PC-9 (cell line): ENCODE measurements at regions of chr12 and their contacts with region 1.

Region 1: DNA sequence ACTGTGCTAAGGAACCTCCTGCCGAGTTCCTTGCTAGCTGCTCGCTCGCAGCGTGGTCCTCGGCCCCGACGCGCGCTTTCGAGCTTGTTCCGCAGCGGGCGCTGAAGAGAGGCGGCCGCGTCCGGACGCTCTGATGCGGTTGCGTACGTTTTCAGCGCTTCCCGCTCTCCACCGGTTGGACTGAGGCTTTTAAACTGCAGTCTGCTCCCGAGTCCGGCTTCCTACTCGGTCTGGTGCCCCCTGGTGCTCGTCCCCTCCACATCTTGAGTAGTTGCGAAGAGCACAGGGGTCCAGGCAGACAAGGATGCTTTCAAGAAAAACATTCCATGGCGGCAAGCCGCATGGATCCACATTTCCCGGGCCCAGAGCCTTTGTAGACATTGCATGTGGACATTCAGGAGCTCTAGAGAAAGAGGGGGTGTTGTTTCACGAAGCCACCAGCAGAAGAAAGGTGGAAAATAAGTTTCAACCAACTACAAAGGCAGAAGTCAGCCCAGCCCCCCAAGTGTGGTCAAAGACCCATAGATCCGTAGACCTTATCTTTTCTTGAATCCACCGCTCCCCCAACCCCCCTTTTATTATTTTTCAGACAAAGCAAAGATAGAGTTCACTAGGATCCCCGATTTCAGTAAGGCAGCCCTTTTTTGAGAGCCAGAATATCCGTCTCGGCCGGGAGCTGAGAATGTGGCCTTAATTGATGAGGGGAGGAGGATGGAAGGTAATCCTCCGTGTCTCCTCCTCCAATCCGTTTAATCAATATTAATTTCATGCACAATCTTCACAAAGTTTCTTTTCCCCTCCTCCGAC is 984 bp upstream of the WNK1 start:
- DNase-seq: peak; percentile 90 to 92
- H3K4me3 ChIP-seq: peak overlapping the region; percentile 81
- H3K27ac ChIP-seq: peak overlapping the region; percentile 38
- H3K4me1 ChIP-seq: peaks cover 32% of the 10 kb centered on the region
- H3K27me3 ChIP-seq: no peaks in the 10 kb centered on the region
- CTCF ChIP-seq: peak; percentile 84

Region 2: GRCh38 chr12:356276-356988 is 395.0 kb before region 1 on chr12:
- CTCF ChIA-PET with region 1: interaction called, 11 read pairs
- POLR2A ChIA-PET with region 1: no interaction called
- intact Hi-C with region 1: no loop called
- DNase-seq: no peak
- H3K4me3 ChIP-seq: no peak overlapping the region
- H3K27ac ChIP-seq: no peak overlapping the region
- H3K4me1 ChIP-seq: peaks cover 5% of the 10 kb centered on the region; the same call in 1 of the 2 replicates
- H3K27me3 ChIP-seq: no peaks in the 10 kb centered on the region
- CTCF ChIP-seq: no peak

Region 3: DNA sequence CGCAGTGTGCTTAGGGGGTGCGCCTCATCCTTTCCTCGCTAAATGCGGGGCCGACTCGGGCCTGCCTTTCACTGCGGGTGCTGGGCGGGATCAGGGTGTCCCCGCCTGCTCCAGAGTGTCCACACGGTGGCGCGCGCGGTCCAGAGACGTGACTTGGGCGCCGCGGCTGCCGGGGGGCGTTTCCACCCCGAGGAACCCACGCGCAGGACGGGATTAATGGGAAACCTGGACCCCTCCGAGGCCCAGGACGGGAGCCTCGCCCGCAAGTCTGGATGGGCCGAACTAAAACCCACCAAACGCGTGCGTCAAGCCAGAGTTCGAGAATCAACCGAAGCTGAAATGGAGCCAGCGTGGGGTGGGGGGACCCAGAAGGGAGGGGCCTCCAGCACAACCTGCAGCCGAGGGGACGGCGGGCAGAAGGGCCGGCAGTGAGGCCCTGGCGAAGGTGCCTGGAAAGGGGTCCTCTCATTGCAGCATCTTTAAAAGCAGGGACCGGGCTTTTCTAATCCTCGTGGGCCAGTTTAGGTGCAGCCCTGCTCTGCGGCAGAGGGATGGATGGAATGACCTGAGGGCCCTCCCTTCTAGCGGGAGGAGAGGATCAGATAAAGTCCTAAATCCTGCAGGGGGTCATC is 181.5 kb before region 1 on chr12:
- CTCF ChIA-PET with region 1: interaction called, 25 read pairs
- POLR2A ChIA-PET with region 1: interaction called, 26 read pairs
- intact Hi-C with region 1: loop called (anchors 1 kb)
- DNase-seq: peak; percentile 61 to 90
- H3K4me3 ChIP-seq: peak overlapping the region; percentile 77
- H3K27ac ChIP-seq: peak overlapping the region; percentile 84; the same call in 1 of the 2 replicates
- H3K4me1 ChIP-seq: peaks cover 25% of the 10 kb centered on the region
- H3K27me3 ChIP-seq: no peaks in the 10 kb centered on the region
- CTCF ChIP-seq: peak; percentile 94

Region 4: GRCh38 chr12:597926-598568 is 153.3 kb before region 1 on chr12:
- CTCF ChIA-PET with region 1: no interaction called
- POLR2A ChIA-PET with region 1: interaction called, 16 read pairs
- intact Hi-C with region 1: no loop called
- DNase-seq: no peak
- H3K4me3 ChIP-seq: no peak overlapping the region
- H3K27ac ChIP-seq: no peak overlapping the region
- H3K4me1 ChIP-seq: no peaks in the 10 kb centered on the region
- H3K27me3 ChIP-seq: no peaks in the 10 kb centered on the region
- CTCF ChIP-seq: no peak

Region 5: GRCh38 chr12:642633-643474 is 108.5 kb before region 1 on chr12:
- CTCF ChIA-PET with region 1: interaction called, 3 read pairs
- POLR2A ChIA-PET with region 1: no interaction called
- intact Hi-C with region 1: loop called (anchors 1 kb)
- DNase-seq: peak; percentile 63 to 76
- H3K4me3 ChIP-seq: peak overlapping the region; percentile 77
- H3K27ac ChIP-seq: peak overlapping the region; percentile 79
- H3K4me1 ChIP-seq: peaks cover 36% of the 10 kb centered on the region
- H3K27me3 ChIP-seq: no peaks in the 10 kb centered on the region
- CTCF ChIP-seq: peak; percentile 55

Region 6: GRCh38 chr12:949453-950191 is 198.2 kb after region 1 on chr12 and contains the start of gene RAD52:
- CTCF ChIA-PET with region 1: interaction called, 3 read pairs
- POLR2A ChIA-PET with region 1: no interaction called
- intact Hi-C with region 1: loop called (anchors 5 kb)
- DNase-seq: peak; percentile 98 to 99
- H3K4me3 ChIP-seq: peak within 1 kb of the TSS; percentile 62
- H3K27ac ChIP-seq: peak within 1 kb of the TSS; percentile 79
- H3K4me1 ChIP-seq: peaks cover 19% of the 10 kb centered on the region
- H3K27me3 ChIP-seq: no peaks in the 10 kb centered on the region
- CTCF ChIP-seq: peak; percentile 99
- total RNA-seq, gene RAD52: 19.7 and 25.0 TPM in 2 replicates

Region 7: DNA sequence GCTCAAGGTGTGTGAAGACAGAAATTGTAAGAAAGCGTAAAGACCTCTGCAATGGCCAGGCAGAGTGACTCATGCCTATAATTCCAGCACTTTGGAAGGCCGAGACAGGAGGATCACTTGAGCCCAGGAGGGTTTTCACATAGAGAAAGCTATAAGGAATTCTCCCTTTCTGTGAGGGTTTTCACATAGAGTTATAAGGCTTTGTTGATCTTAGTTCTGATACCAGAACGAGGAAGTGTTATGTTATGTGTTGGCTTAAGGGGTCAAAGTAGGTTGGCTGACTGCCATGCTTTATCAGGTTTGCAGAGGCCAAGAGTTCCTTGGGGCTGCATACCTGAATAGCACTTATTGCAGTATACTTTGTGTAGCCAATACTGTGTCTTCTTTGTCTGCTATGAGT is 378.8 kb after region 1 on chr12:
- CTCF ChIA-PET with region 1: no interaction called
- POLR2A ChIA-PET with region 1: no interaction called
- intact Hi-C with region 1: no loop called
- DNase-seq: peak; percentile 74 to 98
- H3K4me3 ChIP-seq: peak overlapping the region; percentile 13; the same call in 1 of the 2 replicates
- H3K27ac ChIP-seq: peak overlapping the region; percentile 69
- H3K4me1 ChIP-seq: peaks cover 34% of the 10 kb centered on the region
- H3K27me3 ChIP-seq: no peaks in the 10 kb centered on the region
- CTCF ChIP-seq: no peak